CD8-positive, alpha-beta memory T cell (primary cell): ENCODE measurements at regions of chr6 and their contacts with region 1.

Region 1: GRCh38 chr6:34656378-34657036 is 40.1 kb downstream of the ILRUN start:
- DNase-seq: peak in 1 of 5 donors; percentile 15
- H3K4me3 ChIP-seq: peak overlapping the region; percentile 38
- H3K4me3 Mint-ChIP-seq: peak overlapping the region; percentile 81 to 91 (median 85)
- H3K27ac ChIP-seq: peak overlapping the region; percentile 68
- H3K27ac Mint-ChIP-seq: peak overlapping the region; percentile 88 to 97 (median 96)
- H3K4me1 ChIP-seq: peaks cover 38% of the 10 kb centered on the region
- H3K4me1 Mint-ChIP-seq: peaks cover 57 to 78% (median 58%) of the 10 kb centered on the region in 3 donors
- H3K27me3 ChIP-seq: no peaks in the 10 kb centered on the region
- H3K27me3 Mint-ChIP-seq: no peaks in the 10 kb centered on the region

Region 2: DNA sequence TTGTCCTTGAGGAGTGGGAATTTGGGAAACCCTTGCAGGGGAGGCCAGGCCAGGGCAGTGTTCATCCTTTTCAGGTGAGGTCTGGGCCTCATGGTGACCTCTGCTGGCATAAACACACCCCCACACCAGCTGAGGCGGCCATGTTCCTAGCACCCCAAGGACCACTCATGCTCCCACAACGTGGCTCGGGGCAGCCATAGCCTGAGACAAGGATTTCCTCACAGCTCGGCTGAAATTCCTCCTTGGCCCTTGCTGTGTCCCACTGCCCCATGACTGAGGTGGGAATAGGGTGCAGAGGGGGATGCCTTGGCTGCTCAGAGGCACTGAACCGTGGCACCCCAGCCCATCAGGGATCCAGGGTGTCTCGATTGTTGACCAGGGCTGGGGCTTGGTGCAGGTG is 73.0 kb before region 1 on chr6:
- CTCF ChIA-PET with region 1: no interaction called
- POLR2A ChIA-PET with region 1: no interaction called
- DNase-seq: no peak
- H3K4me3 ChIP-seq: no peak overlapping the region
- H3K4me3 Mint-ChIP-seq: no peak overlapping the region
- H3K27ac ChIP-seq: no peak overlapping the region
- H3K27ac Mint-ChIP-seq: no peak overlapping the region
- H3K4me1 ChIP-seq: no peaks in the 10 kb centered on the region
- H3K4me1 Mint-ChIP-seq: peaks cover 4 to 10% (median 5%) of the 10 kb centered on the region in 3 donors
- H3K27me3 ChIP-seq: no peaks in the 10 kb centered on the region
- H3K27me3 Mint-ChIP-seq: no peaks in the 10 kb centered on the region

Region 3: GRCh38 chr6:34671801-34672656 is 15.5 kb after region 1 on chr6:
- CTCF ChIA-PET with region 1: interaction called, 20 read pairs
- POLR2A ChIA-PET with region 1: interaction called, 29 read pairs
- DNase-seq: peak; percentile 65 to 87 (median 76)
- H3K4me3 ChIP-seq: peak overlapping the region; percentile 38
- H3K4me3 Mint-ChIP-seq: peak overlapping the region; percentile 70 to 90 (median 82)
- H3K27ac ChIP-seq: peak overlapping the region; percentile 69
- H3K27ac Mint-ChIP-seq: peak overlapping the region; percentile 92 to 99 (median 98)
- H3K4me1 ChIP-seq: peaks cover 63% of the 10 kb centered on the region
- H3K4me1 Mint-ChIP-seq: peaks cover 64 to 81% (median 75%) of the 10 kb centered on the region in 3 donors
- H3K27me3 ChIP-seq: no peaks in the 10 kb centered on the region
- H3K27me3 Mint-ChIP-seq: peaks cover 0 to 3% of the 10 kb centered on the region in 2 donors

Region 4: GRCh38 chr6:34810936-34811632 is 154.6 kb after region 1 on chr6:
- CTCF ChIA-PET with region 1: no interaction called
- POLR2A ChIA-PET with region 1: no interaction called
- DNase-seq: no peak
- H3K4me3 ChIP-seq: no peak overlapping the region
- H3K4me3 Mint-ChIP-seq: no peak overlapping the region
- H3K27ac ChIP-seq: no peak overlapping the region
- H3K27ac Mint-ChIP-seq: peak overlapping the region in 1 of 8 donors; percentile 38
- H3K4me1 ChIP-seq: no peaks in the 10 kb centered on the region
- H3K4me1 Mint-ChIP-seq: peaks cover 4 to 31% (median 4%) of the 10 kb centered on the region in 3 donors
- H3K27me3 ChIP-seq: no peaks in the 10 kb centered on the region
- H3K27me3 Mint-ChIP-seq: no peaks in the 10 kb centered on the region